Psoas muscle (tissue), 8 donors: ENCODE measurements at regions of chr5 and their contacts with region 1.

Region 1: GRCh38 chr5:172795318-172795977 is 24.5 kb upstream of the DUSP1 start:
- DNase-seq: peak; percentile 96 to 97
- ATAC-seq: peak; percentile 31 to 85 (median 83)
- H3K4me3 ChIP-seq: no peak overlapping the region
- H3K27ac ChIP-seq: peak overlapping the region; percentile 77
- H3K4me1 ChIP-seq: peaks cover 51% of the 10 kb centered on the region
- H3K27me3 ChIP-seq: no peaks in the 10 kb centered on the region
- CTCF ChIP-seq: no peak

Region 2: DNA sequence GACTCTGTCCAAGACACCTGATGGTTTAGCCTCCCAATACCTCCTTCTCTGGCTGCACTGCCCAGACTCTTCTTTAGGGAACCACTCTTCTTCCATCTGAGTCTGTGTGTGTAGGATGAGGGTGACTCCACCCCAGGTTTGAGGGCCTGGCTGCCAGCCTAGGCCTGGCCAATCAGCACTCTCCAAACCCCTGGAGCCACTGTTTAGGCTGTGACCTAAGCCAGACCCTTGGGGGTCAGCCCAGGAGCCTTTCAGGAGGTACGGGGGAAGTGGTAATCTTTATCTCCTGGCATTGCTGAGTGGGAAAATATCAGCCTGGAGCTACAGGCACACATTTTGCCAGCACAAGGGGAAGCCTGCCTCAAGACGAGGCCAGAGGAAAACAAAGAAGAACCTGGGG is 32.4 kb after region 1 on chr5:
- intact Hi-C with region 1: loop called in 1 of 2 experiments (anchors 2 kb)
- DNase-seq: no peak
- ATAC-seq: no peak
- H3K4me3 ChIP-seq: no peak overlapping the region
- H3K27ac ChIP-seq: no peak overlapping the region
- H3K4me1 ChIP-seq: no peaks in the 10 kb centered on the region
- H3K27me3 ChIP-seq: no peaks in the 10 kb centered on the region
- CTCF ChIP-seq: no peak

Region 3: GRCh38 chr5:172860520-172861443 is 65.3 kb after region 1 on chr5:
- intact Hi-C with region 1: loop called (anchors 5 to 10 kb)
- DNase-seq: peak; percentile 91 to 97
- ATAC-seq: peak; percentile 83 to 89 (median 84)
- H3K4me3 ChIP-seq: peak overlapping the region; percentile 17
- H3K27ac ChIP-seq: peak overlapping the region; percentile 92
- H3K4me1 ChIP-seq: peaks cover 80% of the 10 kb centered on the region
- H3K27me3 ChIP-seq: no peaks in the 10 kb centered on the region
- CTCF ChIP-seq: no peak

Region 4: DNA sequence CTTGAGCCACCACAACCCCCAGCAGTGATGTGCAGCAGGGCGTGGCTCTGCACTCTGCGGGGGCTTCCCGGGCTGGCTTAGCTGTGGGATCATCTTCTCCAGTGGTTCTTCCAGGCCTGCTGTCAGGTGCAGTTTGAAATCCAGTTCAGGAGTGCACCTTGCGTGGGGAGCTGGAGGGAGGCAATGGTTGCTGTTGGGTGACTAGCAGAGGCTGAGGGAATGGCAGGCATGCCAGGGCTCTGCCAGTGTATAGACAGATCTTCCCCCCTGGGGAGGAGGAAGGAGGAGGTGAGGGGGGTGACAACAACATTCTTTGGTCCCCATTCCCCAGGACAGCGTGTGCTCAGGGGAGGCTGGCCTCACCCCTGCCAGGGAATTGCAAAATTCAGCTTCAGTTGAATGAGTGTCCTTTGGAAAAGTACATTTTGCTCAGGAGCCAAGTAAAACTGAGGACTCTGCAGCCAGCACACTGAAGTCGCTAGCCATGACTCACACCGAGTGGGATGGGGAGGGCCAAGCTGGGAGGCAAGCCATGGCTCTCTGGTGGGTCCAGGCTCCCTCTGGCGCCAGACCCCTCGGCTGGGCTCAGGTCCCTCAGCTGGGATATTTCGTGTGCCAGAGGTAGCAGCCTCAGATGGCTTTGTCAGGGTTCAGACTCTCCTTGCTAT is 73.6 kb after region 1 on chr5:
- intact Hi-C with region 1: loop called (anchors 5 to 10 kb)
- DNase-seq: peak; percentile 90 to 95
- ATAC-seq: peak; percentile 67 to 81 (median 76)
- H3K4me3 ChIP-seq: peak overlapping the region; percentile 5
- H3K27ac ChIP-seq: peak overlapping the region; percentile 95
- H3K4me1 ChIP-seq: peaks cover 94% of the 10 kb centered on the region
- H3K27me3 ChIP-seq: no peaks in the 10 kb centered on the region
- CTCF ChIP-seq: peak; percentile 8